ENCODE measurements at regions of chr2 and their contacts with region 1.

Region 1: GRCh38 chr2:135531231-135532228 is at the start of gene R3HDM1:
- DNase-seq: peak; percentile 88 to 99 (median 94)
- ATAC-seq: peak; percentile 75
- H3K4me3 ChIP-seq: peak within 1 kb of the TSS; percentile 74 to 84
- H3K4me3 Mint-ChIP-seq: no peak within 1 kb of the TSS
- H3K27ac ChIP-seq: peak within 1 kb of the TSS; percentile 79 to 91
- H3K27ac Mint-ChIP-seq: no peak within 1 kb of the TSS
- H3K4me1 ChIP-seq: peaks cover 15% of the 10 kb centered on the region
- H3K4me1 Mint-ChIP-seq: peaks cover 29% of the 10 kb centered on the region
- H3K27me3 ChIP-seq: no peaks in the 10 kb centered on the region
- H3K27me3 Mint-ChIP-seq: no peaks in the 10 kb centered on the region
- CTCF ChIP-seq: no peak
- total RNA-seq, gene R3HDM1: 35.3 to 48.2 TPM

Region 2: GRCh38 chr2:134668821-134669220 is 862.7 kb before region 1 on chr2:
- CTCF ChIA-PET with region 1: no interaction called
- POLR2A ChIA-PET with region 1: no interaction called
- intact Hi-C with region 1: loop called in 1 of 2 experiments (anchors 10 kb)
- DNase-seq: peak; percentile 50 to 95 (median 78)
- ATAC-seq: peak; percentile 73
- H3K4me3 ChIP-seq: peak overlapping the region; percentile 0 to 10
- H3K4me3 Mint-ChIP-seq: peak overlapping the region; percentile 42
- H3K27ac ChIP-seq: peak overlapping the region in 1 of 2 experiments; percentile 83
- H3K27ac Mint-ChIP-seq: peak overlapping the region; percentile 82
- H3K4me1 ChIP-seq: peaks cover 60% of the 10 kb centered on the region
- H3K4me1 Mint-ChIP-seq: peaks cover 82% of the 10 kb centered on the region
- H3K27me3 ChIP-seq: no peaks in the 10 kb centered on the region
- H3K27me3 Mint-ChIP-seq: peaks cover 20% of the 10 kb centered on the region
- CTCF ChIP-seq: no peak

Region 3: DNA sequence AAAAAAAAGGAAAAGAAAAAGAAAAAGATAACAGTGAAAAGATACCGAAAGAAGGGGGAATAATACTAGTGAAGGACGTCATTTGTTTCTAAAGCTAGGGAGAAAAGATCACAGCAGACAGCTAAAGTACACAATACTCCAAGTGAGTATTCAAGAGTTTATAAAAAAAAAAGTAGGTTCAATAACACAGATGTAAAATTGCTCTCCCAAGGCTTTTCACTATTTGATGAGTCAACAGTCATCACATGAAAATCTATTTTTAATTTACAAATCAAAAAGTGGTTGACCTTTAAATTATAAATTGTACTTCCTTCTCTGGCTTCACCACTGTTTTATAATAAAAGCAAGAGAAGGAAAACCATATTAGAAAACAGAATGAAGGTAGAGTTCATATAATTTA is 144.5 kb before region 1 on chr2:
- CTCF ChIA-PET with region 1: no interaction called
- POLR2A ChIA-PET with region 1: no interaction called
- intact Hi-C with region 1: no loop called
- DNase-seq: no peak
- ATAC-seq: no peak
- H3K4me3 ChIP-seq: no peak overlapping the region
- H3K4me3 Mint-ChIP-seq: no peak overlapping the region
- H3K27ac ChIP-seq: no peak overlapping the region
- H3K27ac Mint-ChIP-seq: no peak overlapping the region
- H3K4me1 ChIP-seq: no peaks in the 10 kb centered on the region
- H3K4me1 Mint-ChIP-seq: no peaks in the 10 kb centered on the region
- H3K27me3 ChIP-seq: no peaks in the 10 kb centered on the region
- H3K27me3 Mint-ChIP-seq: no peaks in the 10 kb centered on the region
- CTCF ChIP-seq: no peak

Region 4: GRCh38 chr2:135590619-135591260 is 59.2 kb after region 1 on chr2:
- CTCF ChIA-PET with region 1: no interaction called
- POLR2A ChIA-PET with region 1: interaction called, 5 read pairs
- intact Hi-C with region 1: loop called in 1 of 2 experiments (anchors 10 kb)
- DNase-seq: peak in 1 of 9 experiments; percentile 25
- ATAC-seq: peak; percentile 63
- H3K4me3 ChIP-seq: peak overlapping the region in 1 of 2 experiments; percentile 11
- H3K4me3 Mint-ChIP-seq: peak overlapping the region; percentile 59
- H3K27ac ChIP-seq: peak overlapping the region; percentile 18 to 23
- H3K27ac Mint-ChIP-seq: peak overlapping the region; percentile 90
- H3K4me1 ChIP-seq: peaks cover 22% of the 10 kb centered on the region
- H3K4me1 Mint-ChIP-seq: peaks cover 48% of the 10 kb centered on the region
- H3K27me3 ChIP-seq: no peaks in the 10 kb centered on the region
- H3K27me3 Mint-ChIP-seq: no peaks in the 10 kb centered on the region
- CTCF ChIP-seq: no peak

Region 5: GRCh38 chr2:135657806-135658582 is 126.5 kb after region 1 on chr2:
- CTCF ChIA-PET with region 1: no interaction called
- POLR2A ChIA-PET with region 1: interaction called, 10 read pairs
- intact Hi-C with region 1: loop called (anchors 5 kb)
- DNase-seq: peak; percentile 35 to 86 (median 73)
- ATAC-seq: peak; percentile 92
- H3K4me3 ChIP-seq: peak overlapping the region; percentile 21 to 52
- H3K4me3 Mint-ChIP-seq: peak overlapping the region; percentile 85
- H3K27ac ChIP-seq: peak overlapping the region; percentile 41 to 80
- H3K27ac Mint-ChIP-seq: peak overlapping the region; percentile 99
- H3K4me1 ChIP-seq: peaks cover 16% of the 10 kb centered on the region
- H3K4me1 Mint-ChIP-seq: peaks cover 19% of the 10 kb centered on the region
- H3K27me3 ChIP-seq: no peaks in the 10 kb centered on the region
- H3K27me3 Mint-ChIP-seq: no peaks in the 10 kb centered on the region
- CTCF ChIP-seq: no peak

Region 6: DNA sequence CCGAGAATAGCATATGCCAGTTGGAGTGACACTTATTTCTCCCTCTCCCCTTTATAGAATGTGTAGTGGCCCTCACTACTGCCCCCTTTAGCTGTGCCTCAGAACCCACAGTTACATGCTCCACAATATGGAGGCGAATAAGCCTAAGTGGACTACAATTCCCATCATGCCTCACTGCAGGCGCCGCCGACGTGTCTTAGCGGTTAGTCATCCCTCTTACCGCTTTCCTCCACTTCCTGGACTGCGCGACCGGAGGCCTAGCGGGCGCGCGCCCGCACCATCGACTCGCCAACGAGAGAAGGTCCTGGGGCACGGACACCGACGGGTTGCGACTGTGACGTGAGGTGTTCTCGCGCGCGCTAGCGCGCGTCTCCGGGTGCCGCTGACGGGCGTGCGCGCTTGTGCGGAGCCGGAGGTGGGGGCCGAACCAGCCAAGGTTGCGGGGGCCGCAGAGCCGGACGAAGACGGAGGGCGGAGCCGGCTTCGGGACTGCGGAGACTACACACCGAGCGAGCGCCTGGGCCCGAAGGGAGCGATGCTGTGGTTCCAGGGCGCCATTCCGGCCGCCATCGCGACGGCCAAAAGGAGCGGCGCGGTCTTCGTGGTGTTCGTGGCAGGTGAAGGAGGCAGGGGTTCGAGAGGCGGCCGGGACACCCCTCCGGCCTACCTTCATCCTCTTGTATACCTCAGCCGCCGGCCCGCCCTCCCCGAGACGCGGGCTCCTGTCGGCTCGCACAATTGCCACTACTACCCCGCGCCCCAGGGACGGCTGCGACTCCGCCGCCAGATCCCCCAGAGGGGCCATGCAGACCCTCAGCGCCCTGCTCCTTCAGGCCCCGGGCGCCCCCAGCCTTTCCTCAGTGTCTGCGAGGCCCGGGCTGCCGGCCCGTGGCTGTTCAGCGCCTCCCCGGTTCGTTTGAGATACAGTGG is 210.1 kb after region 1 on chr2 and contains the start of gene UBXN4:
- CTCF ChIA-PET with region 1: no interaction called
- POLR2A ChIA-PET with region 1: interaction called, 4 read pairs
- intact Hi-C with region 1: loop called (anchors 1 to 2 kb)
- DNase-seq: peak; percentile 89 to 99 (median 94)
- ATAC-seq: peak; percentile 87
- H3K4me3 ChIP-seq: peak within 1 kb of the TSS; percentile 69 to 96
- H3K4me3 Mint-ChIP-seq: peak within 1 kb of the TSS; percentile 98
- H3K27ac ChIP-seq: peak within 1 kb of the TSS; percentile 89 to 98
- H3K27ac Mint-ChIP-seq: peak within 1 kb of the TSS; percentile 98
- H3K4me1 ChIP-seq: peaks cover 28% of the 10 kb centered on the region
- H3K4me1 Mint-ChIP-seq: peaks cover 43% of the 10 kb centered on the region
- H3K27me3 ChIP-seq: no peaks in the 10 kb centered on the region
- H3K27me3 Mint-ChIP-seq: no peaks in the 10 kb centered on the region
- CTCF ChIP-seq: no peak
- total RNA-seq, gene UBXN4: 157 to 172 TPM

Region 7: GRCh38 chr2:135876066-135876711 is 344.7 kb after region 1 on chr2 and contains the start of gene MCM6:
- CTCF ChIA-PET with region 1: no interaction called
- POLR2A ChIA-PET with region 1: interaction called, 4 read pairs
- intact Hi-C with region 1: loop called (anchors 1 to 2 kb)
- DNase-seq: peak; percentile 95 to 99 (median 97)
- ATAC-seq: peak; percentile 89
- H3K4me3 ChIP-seq: peak within 1 kb of the TSS; percentile 81 to 82
- H3K4me3 Mint-ChIP-seq: peak within 1 kb of the TSS; percentile 92
- H3K27ac ChIP-seq: peak within 1 kb of the TSS; percentile 85 to 96
- H3K27ac Mint-ChIP-seq: peak within 1 kb of the TSS; percentile 97
- H3K4me1 ChIP-seq: peaks cover 18% of the 10 kb centered on the region
- H3K4me1 Mint-ChIP-seq: peaks cover 37% of the 10 kb centered on the region
- H3K27me3 ChIP-seq: no peaks in the 10 kb centered on the region
- H3K27me3 Mint-ChIP-seq: no peaks in the 10 kb centered on the region
- CTCF ChIP-seq: no peak
- total RNA-seq, gene MCM6: 37.3 to 38.8 TPM